Activated CD4-positive, alpha-beta memory T cell treated with anti-CD3 and anti-CD28 coated beads for 36 hours (primary cell): ENCODE measurements at regions of chr1 and their contacts with region 1.

Region 1: GRCh38 chr1:8396786-8397406 is 79.0 kb downstream of the SLC45A1 start:
- DNase-seq: peak; percentile 69
- H3K4me3 Mint-ChIP-seq: peak overlapping the region; percentile 1
- H3K27ac Mint-ChIP-seq: peak overlapping the region; percentile 70
- H3K4me1 Mint-ChIP-seq: peaks cover 70% of the 10 kb centered on the region
- H3K27me3 Mint-ChIP-seq: no peaks in the 10 kb centered on the region

Region 2: GRCh38 chr1:8409106-8409505 is 12.2 kb after region 1 on chr1:
- CTCF ChIA-PET with region 1: interaction called, 28 read pairs
- POLR2A ChIA-PET with region 1: interaction called, 5 read pairs
- intact Hi-C with region 1: loop called (anchors 1 kb)
- DNase-seq: peak; percentile 25
- H3K4me3 Mint-ChIP-seq: peak overlapping the region; percentile 25
- H3K27ac Mint-ChIP-seq: peak overlapping the region; percentile 83
- H3K4me1 Mint-ChIP-seq: peaks cover 77% of the 10 kb centered on the region
- H3K27me3 Mint-ChIP-seq: no peaks in the 10 kb centered on the region

Region 3: GRCh38 chr1:8456308-8456912 is 59.5 kb after region 1 on chr1:
- CTCF ChIA-PET with region 1: no interaction called
- POLR2A ChIA-PET with region 1: no interaction called
- intact Hi-C with region 1: no loop called
- DNase-seq: no peak
- H3K4me3 Mint-ChIP-seq: no peak overlapping the region
- H3K27ac Mint-ChIP-seq: no peak overlapping the region
- H3K4me1 Mint-ChIP-seq: peaks cover 24% of the 10 kb centered on the region
- H3K27me3 Mint-ChIP-seq: no peaks in the 10 kb centered on the region

Region 4: GRCh38 chr1:8477166-8477982 is 80.5 kb after region 1 on chr1:
- CTCF ChIA-PET with region 1: interaction called, 3 read pairs
- POLR2A ChIA-PET with region 1: interaction called, 4 read pairs
- intact Hi-C with region 1: loop called (anchors 1 kb)
- DNase-seq: peak; percentile 52
- H3K4me3 Mint-ChIP-seq: peak overlapping the region; percentile 26
- H3K27ac Mint-ChIP-seq: peak overlapping the region; percentile 40
- H3K4me1 Mint-ChIP-seq: peaks cover 50% of the 10 kb centered on the region
- H3K27me3 Mint-ChIP-seq: no peaks in the 10 kb centered on the region

Region 5: DNA sequence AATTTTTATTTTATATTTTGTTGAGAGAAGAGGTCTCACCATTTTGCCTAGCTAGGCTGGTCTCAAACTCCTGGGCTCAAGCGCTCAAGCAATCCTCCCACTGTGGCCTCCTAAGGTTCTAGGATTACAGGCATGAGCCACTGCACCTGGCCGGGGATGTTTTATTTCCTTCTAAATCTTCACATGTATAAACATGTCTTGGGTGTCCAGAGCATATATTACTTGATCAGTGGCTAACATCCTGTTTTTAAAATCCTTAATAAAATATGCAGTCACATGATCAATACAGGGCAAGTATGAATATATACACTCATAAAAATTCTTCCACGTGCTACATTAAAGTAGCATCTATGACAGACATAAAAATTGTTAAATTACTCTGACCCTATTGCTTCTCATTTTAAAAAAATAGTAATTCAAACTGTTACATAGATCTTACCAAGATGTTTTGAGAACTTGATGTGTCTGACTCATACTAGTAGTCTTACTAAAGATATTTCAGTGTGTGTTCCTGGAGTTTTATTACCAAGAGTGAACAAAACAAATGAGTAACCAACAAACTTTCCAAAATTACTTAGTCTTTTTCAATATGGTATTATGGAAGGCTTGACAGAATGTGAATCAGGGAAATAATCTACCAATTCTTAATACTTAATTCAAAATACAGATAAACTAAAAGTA is 143.5 kb after region 1 on chr1:
- CTCF ChIA-PET with region 1: no interaction called
- POLR2A ChIA-PET with region 1: no interaction called
- intact Hi-C with region 1: loop called (anchors 1 kb)
- DNase-seq: no peak
- H3K4me3 Mint-ChIP-seq: no peak overlapping the region
- H3K27ac Mint-ChIP-seq: peak overlapping the region; percentile 69
- H3K4me1 Mint-ChIP-seq: peaks cover 40% of the 10 kb centered on the region
- H3K27me3 Mint-ChIP-seq: no peaks in the 10 kb centered on the region

Region 6: GRCh38 chr1:8702850-8703810 is 306.2 kb after region 1 on chr1:
- CTCF ChIA-PET with region 1: no interaction called
- POLR2A ChIA-PET with region 1: no interaction called
- intact Hi-C with region 1: loop called (anchors 10 kb)
- DNase-seq: peak; percentile 77
- H3K4me3 Mint-ChIP-seq: peak overlapping the region; percentile 78
- H3K27ac Mint-ChIP-seq: peak overlapping the region; percentile 34
- H3K4me1 Mint-ChIP-seq: peaks cover 27% of the 10 kb centered on the region
- H3K27me3 Mint-ChIP-seq: peaks cover 30% of the 10 kb centered on the region